Activated naive CD8-positive, alpha-beta T cell treated with anti-CD3 and anti-CD28 coated beads, Interleukin-2, amount 10 ng/mL, durations not matched to agents 7 days and 5 days (primary cell): ENCODE measurements at regions of chr10 and their contacts with region 1.

Region 1: GRCh38 chr10:11684717-11685645 is 57.2 kb upstream of the ECHDC3 start:
- DNase-seq: peak; percentile 77
- ATAC-seq: peak; percentile 93
- H3K4me3 Mint-ChIP-seq: peak overlapping the region; percentile 84
- H3K27ac Mint-ChIP-seq: peak overlapping the region; percentile 99
- H3K4me1 Mint-ChIP-seq: peaks cover 37% of the 10 kb centered on the region
- H3K27me3 Mint-ChIP-seq: peaks cover 6% of the 10 kb centered on the region

Region 2: DNA sequence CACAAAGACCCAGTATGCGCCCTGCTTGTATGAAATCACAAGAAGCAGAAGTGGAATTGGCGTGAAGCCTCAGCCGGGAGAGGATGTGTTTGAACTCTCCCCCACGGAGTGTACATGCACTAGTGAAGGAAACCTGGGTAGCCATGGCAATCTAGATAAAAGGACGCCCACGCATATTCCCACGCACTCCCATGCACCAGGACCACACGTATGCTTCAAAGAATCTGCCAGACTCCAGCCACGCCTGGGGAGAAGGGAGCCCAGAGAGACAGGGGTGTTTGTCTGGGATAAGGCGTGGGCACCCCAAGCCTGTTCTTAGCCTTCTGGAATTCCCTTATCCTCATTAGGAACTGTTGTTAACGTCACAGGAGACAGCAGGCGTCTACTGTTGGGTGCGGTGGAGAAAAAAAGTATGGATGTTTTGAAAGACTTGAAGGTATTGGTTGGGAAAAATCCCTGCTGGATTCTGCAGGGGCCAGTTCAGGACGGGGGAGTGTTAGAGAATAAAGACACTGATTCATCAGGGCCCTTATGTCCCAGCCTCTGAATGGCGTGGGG is 28.3 kb after region 1 on chr10:
- POLR2A ChIA-PET with region 1: interaction called, 14 read pairs
- DNase-seq: no peak
- ATAC-seq: no peak
- H3K4me3 Mint-ChIP-seq: no peak overlapping the region
- H3K27ac Mint-ChIP-seq: no peak overlapping the region
- H3K4me1 Mint-ChIP-seq: peaks cover 23% of the 10 kb centered on the region
- H3K27me3 Mint-ChIP-seq: peaks cover 51% of the 10 kb centered on the region

Region 3: DNA sequence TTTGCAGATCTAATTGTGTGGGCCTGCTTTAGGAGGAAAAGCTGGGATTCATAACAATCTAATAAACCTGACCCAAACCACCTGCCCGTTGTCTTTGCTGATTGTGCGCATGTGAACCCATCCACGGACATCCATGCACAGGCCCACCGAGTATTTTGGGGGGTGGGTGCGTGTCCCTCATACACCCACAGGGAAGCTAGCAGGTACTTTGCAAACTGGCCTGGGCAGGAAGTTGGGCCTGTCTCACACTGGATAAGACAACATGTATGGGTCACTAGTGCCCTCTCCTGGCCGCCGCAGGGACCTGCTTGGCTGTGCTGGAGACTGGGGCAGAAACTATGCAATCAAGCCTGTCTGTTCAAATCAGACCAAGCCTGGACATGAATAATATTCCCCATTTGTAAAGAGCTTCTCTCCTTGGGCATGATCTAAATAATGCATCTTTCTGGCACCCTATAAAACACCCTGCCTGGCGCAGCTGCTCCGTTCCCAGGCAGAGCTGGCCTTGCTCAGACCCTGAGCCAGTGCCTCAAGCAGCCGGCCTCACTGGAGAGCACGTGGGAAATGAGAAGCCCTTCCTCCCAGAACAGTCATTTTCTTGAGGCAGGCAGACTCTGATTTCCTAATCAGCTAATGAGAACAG is 73.0 kb after region 1 on chr10:
- POLR2A ChIA-PET with region 1: no interaction called
- DNase-seq: peak; percentile 87
- ATAC-seq: peak; percentile 100
- H3K4me3 Mint-ChIP-seq: no peak overlapping the region
- H3K27ac Mint-ChIP-seq: peak overlapping the region; percentile 71
- H3K4me1 Mint-ChIP-seq: peaks cover 6% of the 10 kb centered on the region
- H3K27me3 Mint-ChIP-seq: peaks cover 3% of the 10 kb centered on the region